ENCODE measurements at regions of chr4 and their contacts with region 1.

Region 1: GRCh38 chr4:143335979-143336780 is 496 bp upstream of the GAB1 start:
- DNase-seq: peak; percentile 91
- H3K4me3 ChIP-seq: peak overlapping the region; percentile 83 to 95 (median 91)
- H3K27ac ChIP-seq: peak overlapping the region; percentile 65
- H3K4me1 ChIP-seq: peaks cover 11% of the 10 kb centered on the region
- H3K27me3 ChIP-seq: no peaks in the 10 kb centered on the region
- CTCF ChIP-seq: no peak

Region 2: GRCh38 chr4:143184217-143185116 is 151.7 kb before region 1 on chr4 and contains the start of gene USP38:
- CTCF ChIA-PET with region 1: no interaction called
- dilution Hi-C with region 1: no loop called
- in situ Hi-C with region 1: no loop called
- intact Hi-C with region 1: loop called (anchors 5 kb)
- DNase-seq: peak; percentile 95
- H3K4me3 ChIP-seq: peak within 1 kb of the TSS; percentile 70 to 98 (median 71)
- H3K27ac ChIP-seq: peak within 1 kb of the TSS; percentile 84
- H3K4me1 ChIP-seq: peaks cover 9% of the 10 kb centered on the region
- H3K27me3 ChIP-seq: no peaks in the 10 kb centered on the region
- CTCF ChIP-seq: no peak
- total RNA-seq, gene USP38: 18.3 to 37.5 TPM

Region 3: DNA sequence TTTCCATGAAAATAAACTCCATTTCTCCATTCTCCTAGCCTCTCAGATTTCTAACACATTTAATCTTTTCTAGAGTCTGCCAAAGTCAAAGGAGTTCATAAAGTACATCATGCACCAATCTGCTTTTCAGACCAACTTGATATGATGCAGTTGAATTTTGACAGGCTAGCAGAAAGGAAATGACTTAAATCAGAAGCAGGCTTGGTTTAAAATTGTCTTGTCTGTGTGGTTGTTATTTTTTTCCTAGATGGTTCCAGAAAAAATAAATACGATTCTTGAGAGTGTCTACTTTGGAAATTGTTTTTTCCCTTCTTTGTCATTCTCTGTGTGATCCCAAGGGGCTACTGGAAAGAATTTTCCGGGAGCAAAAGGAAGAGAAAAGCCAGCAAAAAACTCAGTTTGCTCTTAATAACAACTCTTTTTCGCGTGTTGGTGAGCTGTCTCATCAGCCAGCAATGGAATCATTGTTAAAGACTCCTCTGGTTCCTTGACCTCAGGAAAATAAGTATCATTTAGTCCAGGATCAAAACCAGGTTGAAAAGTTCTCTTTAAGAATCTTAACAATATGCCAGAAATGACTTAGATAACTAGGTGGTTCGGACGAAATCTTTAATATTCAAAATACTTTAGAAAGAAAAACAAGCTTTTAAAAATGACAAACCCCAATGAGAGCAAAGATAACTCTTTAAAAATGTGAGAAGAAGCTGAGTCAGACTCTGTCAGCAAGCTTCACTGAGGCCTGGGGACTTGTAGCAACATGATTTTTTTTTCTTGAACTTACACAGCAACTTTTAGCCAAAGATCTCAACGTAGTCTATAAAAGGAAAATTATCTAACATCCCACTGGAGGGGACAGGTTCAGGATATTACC is 49.2 kb before region 1 on chr4:
- CTCF ChIA-PET with region 1: no interaction called
- dilution Hi-C with region 1: no loop called
- in situ Hi-C with region 1: no loop called
- intact Hi-C with region 1: loop called (anchors 5 kb)
- DNase-seq: peak; percentile 78
- H3K4me3 ChIP-seq: peak overlapping the region in 2 of 3 experiments; percentile 2 to 8
- H3K27ac ChIP-seq: peak overlapping the region; percentile 79
- H3K4me1 ChIP-seq: peaks cover 35% of the 10 kb centered on the region
- H3K27me3 ChIP-seq: no peaks in the 10 kb centered on the region
- CTCF ChIP-seq: no peak

Region 4: DNA sequence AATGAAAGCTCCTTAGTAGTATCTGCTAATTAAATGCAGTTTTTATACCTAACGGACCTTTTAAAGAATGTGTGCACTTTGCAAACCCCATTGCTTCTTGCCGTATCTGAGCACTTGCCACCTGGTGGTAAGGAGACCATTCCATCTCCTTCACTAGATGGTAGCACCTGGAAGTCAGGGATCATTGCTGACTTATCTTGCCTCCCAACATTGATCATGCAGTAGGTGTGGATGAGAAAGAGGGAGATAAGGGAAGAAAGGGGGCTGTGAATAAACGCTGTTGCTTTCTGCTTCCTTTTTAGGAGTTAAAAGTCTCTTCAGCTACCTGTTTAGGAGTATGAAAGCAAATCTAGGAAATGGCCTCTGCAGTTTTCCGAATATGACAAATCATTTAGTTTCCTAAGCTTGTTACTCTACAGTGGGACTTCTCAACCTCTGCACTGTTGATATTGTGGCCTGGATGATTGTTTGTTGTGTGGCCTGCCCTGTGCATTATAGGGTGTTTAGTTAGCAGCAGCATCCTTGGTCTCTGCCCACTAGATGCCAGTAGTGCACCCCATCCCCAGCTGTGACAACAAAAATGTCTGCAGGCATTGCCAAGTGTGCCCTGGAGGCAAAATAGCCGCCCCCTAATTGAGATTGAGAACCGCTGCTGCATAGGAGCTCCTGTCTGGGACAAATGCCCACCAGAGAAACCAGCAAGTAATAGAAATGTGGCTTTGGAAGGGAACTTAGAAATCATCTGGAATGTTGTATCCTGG is 39.3 kb after region 1 on chr4:
- CTCF ChIA-PET with region 1: interaction called, 11 read pairs
- dilution Hi-C with region 1: no loop called
- in situ Hi-C with region 1: no loop called
- intact Hi-C with region 1: no loop called
- DNase-seq: no peak
- H3K4me3 ChIP-seq: no peak overlapping the region
- H3K27ac ChIP-seq: no peak overlapping the region
- H3K4me1 ChIP-seq: no peaks in the 10 kb centered on the region
- H3K27me3 ChIP-seq: no peaks in the 10 kb centered on the region
- CTCF ChIP-seq: peak; percentile 41 to 57

Region 5: GRCh38 chr4:143399113-143399949 is 63.2 kb after region 1 on chr4:
- CTCF ChIA-PET with region 1: no interaction called
- dilution Hi-C with region 1: no loop called
- in situ Hi-C with region 1: no loop called
- intact Hi-C with region 1: loop called (anchors 2 kb)
- DNase-seq: peak; percentile 17
- H3K4me3 ChIP-seq: no peak overlapping the region
- H3K27ac ChIP-seq: no peak overlapping the region
- H3K4me1 ChIP-seq: no peaks in the 10 kb centered on the region
- H3K27me3 ChIP-seq: no peaks in the 10 kb centered on the region
- CTCF ChIP-seq: peak; percentile 68 to 71

Region 6: DNA sequence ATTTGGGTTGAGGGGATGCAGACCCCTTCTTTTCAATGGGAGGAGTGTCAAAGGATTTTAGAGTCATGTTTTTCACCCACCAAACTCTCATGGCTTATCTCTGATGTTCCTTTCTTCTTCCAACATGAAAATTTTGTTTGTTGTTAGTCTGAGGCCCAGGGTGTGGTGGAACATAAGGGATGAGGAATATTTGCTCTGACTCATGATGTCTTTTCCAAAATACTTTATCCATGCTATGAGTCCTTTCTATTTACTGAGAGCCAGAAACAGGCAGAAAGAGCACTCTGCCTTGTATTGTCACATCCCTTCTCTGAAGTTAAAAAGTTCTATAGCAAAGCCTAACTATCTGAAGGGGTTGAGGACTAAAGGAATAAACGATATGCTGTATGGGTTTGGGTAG is 865.9 kb after region 1 on chr4:
- CTCF ChIA-PET with region 1: no interaction called
- dilution Hi-C with region 1: no loop called
- in situ Hi-C with region 1: no loop called
- intact Hi-C with region 1: no loop called
- DNase-seq: no peak
- H3K4me3 ChIP-seq: no peak overlapping the region
- H3K27ac ChIP-seq: no peak overlapping the region
- H3K4me1 ChIP-seq: no peaks in the 10 kb centered on the region
- H3K27me3 ChIP-seq: no peaks in the 10 kb centered on the region
- CTCF ChIP-seq: no peak

Measured in mammary epithelial cell (primary cell).